Left colon (tissue), 2 donors: ENCODE measurements at regions of chr5 and their contacts with region 1.

Region 1: DNA sequence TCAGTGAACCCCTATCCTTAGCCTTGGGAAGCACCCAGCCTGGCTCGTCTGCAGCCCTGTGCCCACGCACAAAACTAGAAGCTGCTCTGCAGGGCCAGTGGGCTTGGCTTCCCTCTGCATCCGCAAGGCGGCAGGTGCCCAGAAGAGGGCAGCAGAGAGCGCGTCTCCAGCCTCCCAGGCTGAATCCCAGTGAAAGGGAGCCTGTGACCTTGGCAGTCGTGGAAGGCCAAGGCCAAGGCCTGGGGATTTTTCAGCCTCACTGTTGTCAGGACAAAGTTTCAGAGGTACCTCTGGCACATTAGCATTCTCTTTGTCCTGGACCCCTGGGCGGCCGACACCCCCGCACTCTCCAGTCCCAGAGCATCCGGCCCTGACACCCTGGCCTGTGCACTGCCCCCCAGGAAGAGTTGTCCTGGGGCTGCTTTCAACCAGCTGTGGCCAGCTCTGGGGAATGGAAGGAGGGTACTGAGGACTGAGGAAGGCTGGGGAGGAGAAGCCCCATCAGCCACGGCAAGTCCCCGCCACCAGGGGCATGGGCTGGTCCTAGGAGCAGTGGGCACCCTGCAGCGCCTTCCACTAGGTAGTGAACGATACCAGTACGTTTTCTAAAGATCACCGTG is 63.6 kb upstream of the IL17B start:
- DNase-seq: peak; percentile 75 to 90
- ATAC-seq: peak; percentile 65

Region 2: DNA sequence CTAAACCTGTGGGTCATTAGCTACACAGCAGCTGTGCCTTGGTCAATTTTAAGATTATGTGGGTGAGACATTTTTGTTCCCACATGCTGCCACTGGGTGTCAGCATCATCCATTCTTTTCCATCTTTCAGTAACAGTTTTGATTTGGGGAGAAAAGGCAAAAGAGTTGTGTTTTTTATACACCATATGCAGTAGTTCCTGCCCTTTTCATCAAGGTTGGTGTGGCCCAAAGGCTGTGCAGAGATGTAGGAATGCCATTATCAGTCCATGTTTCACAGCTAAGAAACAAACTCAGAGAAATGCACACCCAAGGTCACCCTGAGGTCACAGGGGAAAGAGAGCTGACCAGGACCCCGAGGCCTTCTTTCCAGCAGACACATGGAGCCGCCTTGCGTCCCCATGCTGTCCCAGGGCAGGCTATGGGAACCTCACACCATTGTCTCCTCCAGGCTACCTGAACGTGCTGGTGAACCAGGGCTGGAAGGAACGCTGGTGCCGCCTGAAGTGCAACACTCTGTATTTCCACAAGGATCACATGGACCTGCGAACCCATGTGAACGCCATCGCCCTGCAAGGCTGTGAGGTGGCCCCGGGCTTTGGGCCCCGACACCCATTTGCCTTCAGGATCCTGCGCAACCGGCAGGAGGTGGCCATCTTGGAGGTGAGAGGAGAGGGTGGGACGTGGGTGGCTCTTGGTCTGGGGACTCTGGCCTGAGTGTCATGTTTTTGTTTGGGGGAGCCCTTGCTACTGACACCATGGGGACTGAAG is 125.2 kb before region 1 on chr5:
- intact Hi-C with region 1: loop called in 1 of 2 experiments (anchors 5 kb)
- DNase-seq: peak in 1 of 2 donors; percentile 36
- ATAC-seq: no peak

Region 3: DNA sequence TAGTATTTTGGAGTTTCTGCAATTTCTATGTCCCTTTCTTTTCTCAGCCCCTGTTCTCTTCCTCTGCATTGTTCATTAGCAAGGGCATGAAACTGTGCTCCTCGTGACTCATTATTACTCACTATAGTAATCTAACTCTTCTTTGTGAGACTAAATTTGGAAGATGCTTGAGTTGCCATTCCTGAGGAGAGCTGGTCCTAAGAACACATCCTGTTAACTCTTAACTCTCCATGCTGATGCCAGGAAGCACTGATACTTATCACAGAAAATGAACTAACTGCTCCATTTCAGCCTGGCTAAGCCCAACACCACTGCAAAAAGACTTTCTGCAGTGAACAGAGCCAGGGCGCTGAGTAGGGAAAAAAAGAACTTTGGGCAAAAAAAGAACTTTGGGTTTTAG is 119.2 kb after region 1 on chr5:
- intact Hi-C with region 1: loop called (anchors 5 kb)
- DNase-seq: no peak
- ATAC-seq: no peak